GM13976 (cell line): ENCODE measurements at regions of chr16 and their contacts with region 1.

Region 1: DNA sequence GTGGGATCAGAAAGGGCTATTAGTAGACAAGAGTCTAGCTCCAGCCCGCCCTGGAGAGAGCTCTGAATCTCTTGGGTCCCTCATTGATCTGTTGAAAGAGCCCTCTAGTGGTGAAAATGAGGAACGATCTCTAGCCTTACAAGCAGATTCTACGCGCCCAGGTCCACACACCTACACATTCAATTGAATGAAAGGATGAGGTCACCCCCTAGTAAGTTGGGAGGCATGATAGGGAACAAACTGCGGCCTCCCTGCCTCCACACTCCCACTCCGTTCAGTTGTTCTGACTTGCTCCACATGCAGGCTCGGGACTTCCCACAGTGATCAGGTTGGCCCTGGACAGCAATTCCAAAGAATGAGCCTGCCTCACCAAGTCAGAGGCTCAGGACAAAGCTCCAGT is 2.9 kb upstream of the CACNG3 start:
- DNase-seq: peak; percentile 70
- CTCF ChIP-seq: peak; percentile 37

Region 2: GRCh38 chr16:24151482-24151939 is 101.7 kb before region 1 on chr16:
- in situ Hi-C with region 1: no loop called
- DNase-seq: no peak
- CTCF ChIP-seq: no peak

Region 3: GRCh38 chr16:24499193-24499814 is 246.1 kb after region 1 on chr16:
- in situ Hi-C with region 1: loop called (anchors 25 kb)
- DNase-seq: peak; percentile 44
- CTCF ChIP-seq: peak; percentile 39